ENCODE measurements at regions of chr18 and their contacts with region 1.

Region 1: GRCh38 chr18:62425465-62426195 is 97.2 kb upstream of the ZCCHC2 start:
- DNase-seq: peak; percentile 70
- H3K4me3 Mint-ChIP-seq: no peak overlapping the region
- H3K27ac Mint-ChIP-seq: no peak overlapping the region
- H3K4me1 Mint-ChIP-seq: peaks cover 30% of the 10 kb centered on the region
- H3K27me3 Mint-ChIP-seq: peaks cover 1% of the 10 kb centered on the region

Region 2: DNA sequence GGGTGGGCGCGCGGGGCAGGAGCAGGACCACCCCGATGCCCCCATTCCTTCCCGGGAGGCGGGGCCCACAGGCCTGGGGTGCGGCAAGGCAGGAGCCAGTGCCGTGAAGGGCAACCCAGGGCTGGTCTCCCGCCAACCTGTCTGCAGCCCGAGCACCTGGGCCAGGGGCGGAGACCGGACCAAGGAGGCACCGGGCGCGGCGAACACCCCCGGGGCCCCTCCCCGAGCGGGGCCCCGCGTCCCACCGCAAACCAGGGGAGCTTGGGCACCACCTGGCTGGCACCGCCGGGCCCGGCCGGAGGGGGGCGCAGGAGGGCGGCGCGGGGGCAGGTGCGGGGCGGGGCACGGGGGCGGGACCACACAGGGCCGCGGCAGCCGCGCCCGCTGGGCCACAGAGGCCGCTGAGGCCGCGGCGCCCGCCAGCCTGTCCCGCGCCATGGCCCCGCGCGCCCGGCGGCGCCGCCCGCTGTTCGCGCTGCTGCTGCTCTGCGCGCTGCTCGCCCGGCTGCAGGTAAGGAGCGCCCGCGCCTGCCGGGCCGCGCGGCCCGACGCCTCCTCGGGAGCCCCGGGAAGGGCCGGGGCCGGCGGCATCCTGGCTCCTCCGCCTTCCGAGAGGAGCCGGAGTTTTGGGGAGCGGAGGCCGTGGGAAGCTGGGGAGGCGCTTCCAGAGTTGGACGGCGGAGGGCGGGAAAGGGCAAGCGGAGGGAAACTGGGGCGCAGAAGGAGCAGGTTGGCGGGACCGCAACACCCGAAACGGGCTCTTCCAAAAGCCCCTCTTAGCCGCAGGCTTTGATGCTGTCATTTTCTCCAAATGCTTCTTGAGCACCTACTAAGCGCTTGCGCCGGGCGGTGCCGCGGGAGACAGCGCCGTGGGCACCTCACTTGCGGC is 100.5 kb before region 1 on chr18 and contains the start of gene TNFRSF11A:
- CTCF ChIA-PET with region 1: interaction called, 5 read pairs
- POLR2A ChIA-PET with region 1: no interaction called
- intact Hi-C with region 1: loop called (anchors 1 kb)
- DNase-seq: peak; percentile 79
- H3K4me3 Mint-ChIP-seq: peak within 1 kb of the TSS; percentile 79
- H3K27ac Mint-ChIP-seq: peak within 1 kb of the TSS; percentile 46
- H3K4me1 Mint-ChIP-seq: peaks cover 28% of the 10 kb centered on the region
- H3K27me3 Mint-ChIP-seq: peaks cover 68% of the 10 kb centered on the region
- total RNA-seq, gene TNFRSF11A: 5.7 to 6.1 TPM

Region 3: GRCh38 chr18:62396381-62396780 is 29.2 kb before region 1 on chr18:
- CTCF ChIA-PET with region 1: interaction called, 5 read pairs
- POLR2A ChIA-PET with region 1: interaction called, 5 read pairs
- intact Hi-C with region 1: loop called (anchors 1 kb)
- DNase-seq: peak; percentile 58
- H3K4me3 Mint-ChIP-seq: no peak overlapping the region
- H3K27ac Mint-ChIP-seq: peak overlapping the region; percentile 19
- H3K4me1 Mint-ChIP-seq: peaks cover 27% of the 10 kb centered on the region
- H3K27me3 Mint-ChIP-seq: peaks cover 15% of the 10 kb centered on the region

Region 4: GRCh38 chr18:62445386-62445917 is 19.8 kb after region 1 on chr18:
- CTCF ChIA-PET with region 1: interaction called, 11 read pairs
- POLR2A ChIA-PET with region 1: no interaction called
- intact Hi-C with region 1: loop called (anchors 2 kb)
- DNase-seq: peak; percentile 42
- H3K4me3 Mint-ChIP-seq: no peak overlapping the region
- H3K27ac Mint-ChIP-seq: no peak overlapping the region
- H3K4me1 Mint-ChIP-seq: peaks cover 10% of the 10 kb centered on the region
- H3K27me3 Mint-ChIP-seq: peaks cover 7% of the 10 kb centered on the region

Region 5: DNA sequence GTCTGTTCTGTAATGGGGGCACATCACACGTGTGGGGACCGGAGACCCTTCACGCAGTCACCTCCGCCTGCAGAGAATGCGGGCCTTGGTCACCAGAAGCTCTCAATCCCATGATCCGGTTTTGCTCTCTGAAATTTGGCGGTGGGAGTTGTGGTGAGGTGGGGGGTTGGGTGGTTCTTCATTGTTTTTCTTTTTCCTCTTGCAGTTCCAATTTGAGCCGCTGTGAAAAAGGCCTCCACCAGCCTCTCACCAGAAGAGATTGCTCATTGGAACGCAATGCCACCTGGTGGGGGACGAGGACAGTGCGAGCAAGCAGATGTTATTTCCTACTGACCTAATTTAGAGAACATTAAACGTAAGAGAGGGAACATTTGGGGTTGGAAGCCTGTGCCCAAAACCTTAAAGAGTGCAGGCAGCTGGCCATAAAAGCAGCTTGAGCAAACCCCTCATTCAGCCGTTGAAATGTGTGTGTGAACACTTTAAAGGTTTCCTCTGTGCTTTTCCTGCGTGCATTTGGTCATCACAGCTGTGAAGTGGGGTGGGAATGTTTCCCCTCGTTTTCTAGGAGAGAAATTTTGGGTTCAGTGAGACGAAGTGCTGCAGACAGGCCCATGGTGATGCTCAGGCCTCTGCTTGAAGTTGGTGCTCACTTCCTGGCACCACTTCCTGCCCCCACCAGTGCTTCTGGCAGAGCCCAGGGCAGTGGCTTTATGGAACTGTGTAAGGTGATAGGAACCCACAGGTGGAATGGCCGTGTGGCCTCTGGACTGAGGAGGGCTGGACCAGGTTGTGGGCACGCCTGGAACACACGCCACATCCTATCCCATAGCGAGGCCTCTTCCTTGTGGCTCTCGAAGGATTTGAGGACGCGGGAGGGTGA is 158.9 kb after region 1 on chr18:
- CTCF ChIA-PET with region 1: interaction called, 38 read pairs
- POLR2A ChIA-PET with region 1: interaction called, 5 read pairs
- intact Hi-C with region 1: loop called (anchors 1 kb)
- DNase-seq: peak; percentile 91
- H3K4me3 Mint-ChIP-seq: no peak overlapping the region
- H3K27ac Mint-ChIP-seq: peak overlapping the region; percentile 94
- H3K4me1 Mint-ChIP-seq: peaks cover 39% of the 10 kb centered on the region
- H3K27me3 Mint-ChIP-seq: no peaks in the 10 kb centered on the region

Region 6: GRCh38 chr18:63161761-63162195 is 736.1 kb after region 1 on chr18:
- CTCF ChIA-PET with region 1: no interaction called
- POLR2A ChIA-PET with region 1: no interaction called
- intact Hi-C with region 1: loop called (anchors 1 kb)
- DNase-seq: peak; percentile 90
- H3K4me3 Mint-ChIP-seq: peak overlapping the region; percentile 78
- H3K27ac Mint-ChIP-seq: peak overlapping the region; percentile 98
- H3K4me1 Mint-ChIP-seq: peaks cover 92% of the 10 kb centered on the region
- H3K27me3 Mint-ChIP-seq: no peaks in the 10 kb centered on the region

Measured in activated CD4-positive, alpha-beta memory T cell treated with anti-CD3 and anti-CD28 coated beads for 36 hours (primary cell).